ENCODE measurements at regions of chr11 and their contacts with region 1.

Region 1: DNA sequence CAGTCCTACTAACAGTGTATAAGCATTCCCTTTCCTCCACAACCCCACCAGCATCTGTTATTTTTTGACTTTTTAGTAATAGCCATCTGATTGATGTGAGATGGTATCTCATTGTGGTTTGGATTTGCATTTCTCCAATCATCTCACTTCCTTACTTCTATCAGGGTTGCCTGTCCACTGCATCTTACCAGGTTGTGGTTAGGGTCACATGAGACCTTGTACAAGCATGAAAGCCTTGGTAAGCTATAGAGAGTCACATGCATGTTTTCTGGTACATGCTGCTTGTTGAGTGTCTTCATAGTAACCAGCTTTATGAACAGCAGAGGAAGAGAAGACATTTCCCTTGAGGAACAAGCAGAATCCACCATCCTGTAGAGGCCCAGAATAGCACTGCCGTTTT is 102.9 kb upstream of the PAX6 start:
- DNase-seq: no peak
- H3K4me3 ChIP-seq: no peak overlapping the region
- H3K27ac ChIP-seq: no peak overlapping the region
- H3K4me1 ChIP-seq: no peaks in the 10 kb centered on the region
- H3K27me3 ChIP-seq: no peaks in the 10 kb centered on the region
- CTCF ChIP-seq: no peak
- EP300 ChIP-seq: no peak
- POLR2A ChIP-seq: no peak
- RAD21 ChIP-seq: no peak

Region 2: DNA sequence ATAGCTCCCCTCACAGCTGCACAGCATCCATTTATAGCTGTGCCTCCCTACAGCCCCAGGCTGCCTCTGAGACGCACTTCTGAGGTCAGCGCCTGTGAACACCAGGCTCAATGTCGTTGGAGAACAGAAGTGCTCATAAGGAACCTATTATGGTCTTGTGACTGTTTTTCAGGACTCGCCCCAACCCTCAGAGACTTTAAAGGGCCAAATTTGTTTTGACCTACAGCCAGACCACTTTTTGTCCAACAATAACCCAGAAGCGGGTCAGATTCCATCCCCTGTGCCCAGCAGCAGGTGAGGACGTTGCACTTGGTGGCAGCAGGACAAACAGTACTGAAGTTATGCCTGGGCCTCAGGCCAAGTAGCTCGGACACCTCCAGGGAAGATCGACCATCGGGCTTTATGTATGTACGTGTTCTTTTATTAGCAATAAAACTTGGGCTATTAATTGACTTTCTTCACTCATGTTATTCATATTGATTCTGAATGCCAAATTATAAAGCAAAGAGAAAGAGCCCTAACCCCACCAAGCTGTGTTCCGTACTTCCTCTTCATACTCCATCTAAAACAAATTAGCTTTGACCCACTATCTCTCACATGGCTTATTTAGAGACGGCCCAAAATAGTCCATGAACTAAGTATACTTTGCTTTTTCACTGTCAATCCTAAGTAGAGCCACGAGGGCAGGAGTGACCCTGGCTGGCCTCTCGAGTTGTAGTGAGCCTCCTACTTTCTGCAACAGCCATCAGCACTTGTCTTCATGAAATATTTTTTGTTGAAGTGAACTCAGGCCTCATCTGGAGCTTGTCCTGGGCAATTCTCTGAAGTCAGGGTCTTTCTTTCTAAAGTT is 10.5 kb before region 1 on chr11:
- CTCF ChIA-PET with region 1: interaction called, 22 read pairs
- POLR2A ChIA-PET with region 1: no interaction called
- DNase-seq: no peak
- H3K4me3 ChIP-seq: no peak overlapping the region
- H3K27ac ChIP-seq: no peak overlapping the region
- H3K4me1 ChIP-seq: peaks cover 0 to 3% (median 0%) of the 10 kb centered on the region in 4 experiments; a peak in 1 of 7 replicates
- H3K27me3 ChIP-seq: no peaks in the 10 kb centered on the region
- CTCF ChIP-seq: no peak
- EP300 ChIP-seq: no peak
- POLR2A ChIP-seq: no peak
- RAD21 ChIP-seq: no peak

Region 3: GRCh38 chr11:31926106-31926505 is 12.1 kb after region 1 on chr11:
- CTCF ChIA-PET with region 1: interaction called, 12 read pairs
- POLR2A ChIA-PET with region 1: no interaction called
- DNase-seq: no peak
- H3K4me3 ChIP-seq: no peak overlapping the region
- H3K27ac ChIP-seq: no peak overlapping the region
- H3K4me1 ChIP-seq: no peaks in the 10 kb centered on the region
- H3K27me3 ChIP-seq: no peaks in the 10 kb centered on the region
- CTCF ChIP-seq: no peak
- EP300 ChIP-seq: no peak
- POLR2A ChIP-seq: no peak
- RAD21 ChIP-seq: no peak